AG04449 (cell line): ENCODE measurements at regions of chr18 and their contacts with region 1.

Region 1: GRCh38 chr18:57881818-57882413 is 78.8 kb upstream of the ATP8B1 start:
- DNase-seq: peak; percentile 38
- H3K4me3 ChIP-seq: no peak overlapping the region
- CTCF ChIP-seq: peak; percentile 95

Region 2: GRCh38 chr18:57898506-57899124 is 16.7 kb after region 1 on chr18:
- CTCF ChIA-PET with region 1: interaction called, 20 read pairs
- POLR2A ChIA-PET with region 1: no interaction called
- DNase-seq: peak; percentile 88
- H3K4me3 ChIP-seq: no peak overlapping the region
- CTCF ChIP-seq: no peak

Region 3: DNA sequence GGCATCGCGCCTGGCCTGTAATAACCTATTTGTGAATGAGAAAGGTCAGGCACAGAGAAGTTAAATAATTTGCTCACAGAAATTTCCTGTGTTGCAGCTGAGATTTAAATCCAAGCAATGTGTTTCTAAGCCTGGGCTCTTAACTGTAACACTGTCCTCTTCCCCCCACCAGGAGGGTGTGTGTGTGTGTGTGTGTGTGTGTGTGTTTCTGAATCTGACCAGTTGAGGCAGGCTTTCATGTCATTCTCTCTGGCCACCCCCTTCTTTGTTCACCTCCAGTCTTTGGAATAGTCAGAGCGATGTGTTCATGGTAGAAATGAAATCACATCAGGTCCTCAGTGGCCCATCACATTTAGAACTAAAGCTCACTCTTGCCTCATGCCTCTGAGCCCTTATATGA is 243.3 kb after region 1 on chr18:
- CTCF ChIA-PET with region 1: interaction called, 46 read pairs
- POLR2A ChIA-PET with region 1: no interaction called
- DNase-seq: no peak
- H3K4me3 ChIP-seq: no peak overlapping the region
- CTCF ChIP-seq: no peak

Region 4: GRCh38 chr18:58135701-58136331 is 253.9 kb after region 1 on chr18:
- CTCF ChIA-PET with region 1: interaction called, 16 read pairs
- POLR2A ChIA-PET with region 1: no interaction called
- DNase-seq: no peak
- H3K4me3 ChIP-seq: no peak overlapping the region
- CTCF ChIP-seq: peak; percentile 71